ENCODE measurements at regions of chr1 and their contacts with region 1.

Region 1: GRCh38 chr1:116763787-116764465 is 9.7 kb downstream of the CD2 start:
- DNase-seq: no peak
- H3K4me3 ChIP-seq: no peak overlapping the region
- H3K27ac ChIP-seq: no peak overlapping the region
- H3K4me1 ChIP-seq: no peaks in the 10 kb centered on the region
- H3K27me3 ChIP-seq: no peaks in the 10 kb centered on the region
- CTCF ChIP-seq: peak; percentile 46 to 59

Region 2: DNA sequence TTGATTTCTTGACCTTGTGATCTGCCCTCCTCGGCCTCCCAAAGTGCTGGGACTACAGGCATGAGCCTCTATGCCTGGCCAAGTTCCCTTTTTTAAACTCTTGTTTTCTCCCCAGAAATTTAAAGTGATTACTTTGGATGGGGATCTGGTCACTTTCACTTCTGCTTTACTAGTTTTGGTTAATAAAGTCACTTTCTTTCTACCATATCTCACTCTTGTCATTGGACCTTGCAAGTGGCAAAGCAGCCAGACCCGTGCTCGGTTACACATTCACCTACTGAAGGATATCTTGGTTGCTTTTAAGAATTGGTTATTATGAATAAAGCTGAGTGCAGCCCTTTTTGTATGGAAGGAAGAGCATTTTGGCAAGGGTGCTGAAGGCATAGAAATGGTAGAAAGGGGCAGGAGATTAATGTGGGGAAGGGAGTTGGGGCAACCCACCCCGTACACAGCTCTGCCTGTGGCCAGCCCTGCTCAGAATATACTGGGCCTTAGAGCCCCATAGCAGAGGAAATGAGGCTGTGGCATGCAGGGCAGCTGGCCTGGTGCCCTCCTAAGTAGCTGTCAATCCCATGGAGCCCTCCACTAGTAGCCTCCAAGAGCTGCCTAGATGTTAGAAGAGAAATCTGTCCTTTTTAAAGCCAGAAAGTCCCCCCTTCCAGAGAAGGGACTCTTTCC is 31.0 kb after region 1 on chr1:
- CTCF ChIA-PET with region 1: no interaction called
- dilution Hi-C with region 1: no loop called
- in situ Hi-C with region 1: no loop called
- intact Hi-C with region 1: no loop called
- DNase-seq: no peak
- H3K4me3 ChIP-seq: no peak overlapping the region
- H3K27ac ChIP-seq: no peak overlapping the region
- H3K4me1 ChIP-seq: peaks cover 7% of the 10 kb centered on the region
- H3K27me3 ChIP-seq: no peaks in the 10 kb centered on the region
- CTCF ChIP-seq: no peak

Region 3: GRCh38 chr1:116817582-116818064 is 53.7 kb after region 1 on chr1:
- CTCF ChIA-PET with region 1: interaction called, 14 read pairs
- dilution Hi-C with region 1: no loop called
- in situ Hi-C with region 1: no loop called
- intact Hi-C with region 1: loop called (anchors 1 kb)
- DNase-seq: peak; percentile 63
- H3K4me3 ChIP-seq: no peak overlapping the region
- H3K27ac ChIP-seq: no peak overlapping the region
- H3K4me1 ChIP-seq: peaks cover 12% of the 10 kb centered on the region
- H3K27me3 ChIP-seq: no peaks in the 10 kb centered on the region
- CTCF ChIP-seq: peak; percentile 78 to 89

Region 4: GRCh38 chr1:117045644-117046043 is 281.7 kb after region 1 on chr1:
- CTCF ChIA-PET with region 1: no interaction called
- dilution Hi-C with region 1: no loop called
- in situ Hi-C with region 1: no loop called
- intact Hi-C with region 1: no loop called
- DNase-seq: no peak
- H3K4me3 ChIP-seq: no peak overlapping the region
- H3K27ac ChIP-seq: no peak overlapping the region
- H3K4me1 ChIP-seq: no peaks in the 10 kb centered on the region
- H3K27me3 ChIP-seq: no peaks in the 10 kb centered on the region
- CTCF ChIP-seq: no peak